Activated T-helper 2 cell treated with anti-CD3 and anti-CD28 coated beads, Interferon-gamma antibody, Interleukin-2, Interleukin-4, amounts not matched to agents 10 μg/mL and 5 μg/mL and 100 μg/mL, durations not matched to agents 14 hours and 24 hours and 36 hours (primary cell): ENCODE measurements at regions of chr11 and their contacts with region 1.

Region 1: GRCh38 chr11:207208-207862 is at the starts of genes BET1L and RIC8A:
- DNase-seq: peak; percentile 98
- H3K4me3 Mint-ChIP-seq: peak within 1 kb of the TSS; percentile 100
- H3K27ac Mint-ChIP-seq: peak within 1 kb of the TSS; percentile 100
- H3K4me1 Mint-ChIP-seq: peaks cover 26% of the 10 kb centered on the region
- H3K27me3 Mint-ChIP-seq: no peaks in the 10 kb centered on the region
- total RNA-seq, gene BET1L: 43.7 and 46.3 TPM in 2 replicates
- total RNA-seq, gene RIC8A: 109 and 110 TPM in 2 replicates

Region 2: GRCh38 chr11:236774-237767 is 29.7 kb after region 1 on chr11 and contains the start of gene PSMD13:
- intact Hi-C with region 1: loop called (anchors 1 kb)
- DNase-seq: peak; percentile 87
- H3K4me3 Mint-ChIP-seq: peak within 1 kb of the TSS; percentile 96
- H3K27ac Mint-ChIP-seq: peak within 1 kb of the TSS; percentile 100
- H3K4me1 Mint-ChIP-seq: peaks cover 53% of the 10 kb centered on the region
- H3K27me3 Mint-ChIP-seq: no peaks in the 10 kb centered on the region
- total RNA-seq, gene PSMD13: 255 and 258 TPM in 2 replicates

Region 3: DNA sequence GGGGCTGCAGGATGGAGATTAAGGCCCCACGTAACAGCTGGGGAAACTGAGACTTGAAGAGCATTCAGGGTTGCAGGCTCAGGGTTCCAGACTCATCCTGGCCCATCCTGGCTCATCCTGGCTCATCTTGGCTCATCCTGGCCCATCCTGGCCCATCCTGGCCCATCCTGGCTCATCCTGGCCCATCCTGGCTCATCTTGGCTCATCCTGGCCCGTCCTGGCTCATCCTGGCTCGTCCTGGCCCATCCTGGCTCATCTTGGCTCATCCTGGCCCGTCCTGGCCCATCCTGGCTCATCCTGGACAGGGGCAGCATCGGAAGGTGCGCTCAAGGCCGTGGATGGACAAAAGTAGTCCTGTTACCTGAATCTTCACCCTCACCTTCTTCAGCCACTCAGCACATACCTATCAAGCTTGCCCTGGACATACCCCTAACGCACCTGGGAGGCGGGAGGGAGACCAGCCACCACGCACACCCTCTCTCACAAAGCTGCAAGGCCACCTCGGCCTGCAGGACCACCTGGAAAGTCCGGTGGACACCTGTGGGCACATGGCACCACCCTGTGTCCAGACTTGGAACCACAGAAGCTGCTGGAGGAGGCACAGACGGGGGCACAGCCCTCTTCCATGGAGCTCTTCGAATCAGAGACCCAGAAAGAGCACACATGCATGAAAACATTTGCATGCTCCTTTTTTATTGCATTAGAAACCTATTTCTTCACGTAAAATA is 50.6 kb after region 1 on chr11:
- intact Hi-C with region 1: no loop called
- DNase-seq: no peak
- H3K4me3 Mint-ChIP-seq: no peak overlapping the region
- H3K27ac Mint-ChIP-seq: no peak overlapping the region
- H3K4me1 Mint-ChIP-seq: peaks cover 2% of the 10 kb centered on the region
- H3K27me3 Mint-ChIP-seq: peaks cover 7% of the 10 kb centered on the region

Region 4: DNA sequence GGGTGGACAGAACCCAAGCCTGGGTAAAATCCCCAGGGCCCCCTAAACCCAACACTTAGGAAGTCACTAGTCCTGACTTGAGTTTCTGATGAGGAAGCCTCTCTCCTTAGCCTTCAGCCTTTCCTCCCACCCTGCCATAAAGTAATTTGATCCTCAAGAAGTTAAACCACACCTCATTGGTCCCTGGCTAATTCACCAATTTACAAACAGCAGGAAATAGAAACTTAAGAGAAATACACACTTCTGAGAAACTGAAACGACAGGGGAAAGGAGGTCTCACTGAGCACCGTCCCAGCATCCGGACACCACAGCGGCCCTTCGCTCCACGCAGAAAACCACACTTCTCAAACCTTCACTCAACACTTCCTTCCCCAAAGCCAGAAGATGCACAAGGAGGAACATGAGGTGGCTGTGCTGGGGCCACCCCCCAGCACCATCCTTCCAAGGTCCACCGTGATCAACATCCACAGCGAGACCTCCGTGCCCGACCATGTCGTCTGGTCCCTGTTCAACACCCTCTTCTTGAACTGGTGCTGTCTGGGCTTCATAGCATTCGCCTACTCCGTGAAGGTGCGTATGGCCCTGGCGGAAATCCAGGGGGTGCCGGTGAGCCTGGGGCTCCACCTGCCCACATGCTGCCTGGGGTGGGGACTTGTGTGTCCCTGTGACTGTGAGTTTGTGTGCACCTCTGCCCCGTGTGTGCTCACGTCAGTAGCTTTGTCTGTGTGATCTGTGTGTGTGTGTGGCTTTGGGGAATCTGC is 106.6 kb after region 1 on chr11 and contains the start of gene IFITM1:
- intact Hi-C with region 1: loop called (anchors 5 kb)
- DNase-seq: peak; percentile 74
- H3K4me3 Mint-ChIP-seq: peak within 1 kb of the TSS; percentile 90
- H3K27ac Mint-ChIP-seq: peak within 1 kb of the TSS; percentile 91
- H3K4me1 Mint-ChIP-seq: peaks cover 34% of the 10 kb centered on the region
- H3K27me3 Mint-ChIP-seq: no peaks in the 10 kb centered on the region
- total RNA-seq, gene IFITM1: 256 and 260 TPM in 2 replicates

Region 5: DNA sequence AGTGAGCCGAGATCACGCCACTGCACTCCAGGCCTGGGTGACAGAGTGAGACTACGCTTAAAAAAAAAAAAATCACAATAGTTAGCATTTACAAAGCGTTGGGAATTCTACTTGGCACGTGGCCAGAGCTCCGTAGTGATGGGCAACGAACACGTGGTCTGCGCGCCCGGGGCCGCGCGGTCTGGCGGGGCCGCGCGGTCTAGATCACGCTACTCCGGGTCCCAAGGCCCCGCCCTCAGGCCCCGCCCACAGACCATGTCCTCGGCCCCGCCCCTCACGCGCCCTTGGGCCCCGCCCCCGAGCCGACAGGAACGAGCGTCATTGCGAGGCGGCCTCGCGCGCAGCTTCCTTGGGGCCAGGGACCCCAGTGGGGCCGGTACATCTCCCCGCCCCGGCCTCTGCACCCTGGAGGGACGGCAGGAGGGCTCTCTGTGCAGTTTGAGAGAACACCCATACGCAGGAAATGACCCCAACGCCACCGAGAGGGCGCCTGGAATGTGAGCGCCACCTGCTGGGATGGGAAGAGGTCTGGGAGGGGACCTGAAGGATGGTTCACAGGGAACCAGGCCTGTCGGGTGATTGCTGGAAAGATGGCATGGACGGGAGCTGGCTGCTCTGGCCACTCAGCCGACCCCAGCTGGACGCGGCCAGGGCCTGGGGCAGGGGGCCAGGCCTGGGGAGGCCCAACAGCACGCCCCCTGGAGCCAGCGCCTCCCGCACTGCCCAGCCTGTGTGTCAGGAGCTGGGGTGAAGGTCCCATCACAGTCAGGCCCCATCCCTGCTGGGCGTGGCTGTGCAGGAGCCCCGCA is 240.8 kb after region 1 on chr11:
- intact Hi-C with region 1: loop called (anchors 2 kb)
- DNase-seq: peak; percentile 91
- H3K4me3 Mint-ChIP-seq: peak overlapping the region; percentile 86
- H3K27ac Mint-ChIP-seq: peak overlapping the region; percentile 93
- H3K4me1 Mint-ChIP-seq: peaks cover 12% of the 10 kb centered on the region
- H3K27me3 Mint-ChIP-seq: peaks cover 3% of the 10 kb centered on the region

Region 6: GRCh38 chr11:819129-819931 is 612.0 kb after region 1 on chr11:
- intact Hi-C with region 1: loop called (anchors 5 kb)
- DNase-seq: peak; percentile 87
- H3K4me3 Mint-ChIP-seq: peak overlapping the region; percentile 80
- H3K27ac Mint-ChIP-seq: peak overlapping the region; percentile 62
- H3K4me1 Mint-ChIP-seq: peaks cover 8% of the 10 kb centered on the region
- H3K27me3 Mint-ChIP-seq: no peaks in the 10 kb centered on the region